IMR-90 (cell line): ENCODE measurements at regions of chr1 and their contacts with region 1.

Region 1: DNA sequence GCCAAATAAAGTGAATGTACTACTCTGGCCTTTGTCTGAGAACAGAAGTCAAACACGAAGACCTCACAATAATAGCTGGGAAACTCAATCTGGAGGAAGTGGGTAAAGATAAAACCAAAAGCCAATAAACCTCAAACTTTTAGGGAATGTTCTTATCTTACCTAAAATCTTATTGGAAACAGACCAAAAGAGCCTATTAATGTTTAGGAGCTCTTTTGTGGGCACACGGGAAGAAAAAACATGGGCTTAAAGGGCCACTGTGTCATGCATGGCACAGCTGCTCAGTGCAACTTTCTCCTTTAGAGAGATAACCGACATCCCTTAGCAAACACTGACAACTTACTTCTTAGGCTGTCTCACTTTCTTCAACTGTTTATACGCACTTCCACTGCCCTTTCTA is 16.1 kb downstream of the EIF2B3 start:
- DNase-seq: peak; percentile 30
- ATAC-seq: 0 out of 2 replicates have a peak, but pooled peaks have one; percentile 44
- H3K4me3 ChIP-seq: no peak overlapping the region
- H3K27ac ChIP-seq: no peak overlapping the region
- H3K4me1 ChIP-seq: peaks cover 2% of the 10 kb centered on the region; the same call in 1 of the 2 replicates
- H3K27me3 ChIP-seq: no peaks in the 10 kb centered on the region
- CTCF ChIP-seq: no peak
- POLR2A ChIP-seq: no peak
- RAD21 ChIP-seq: no peak

Region 2: DNA sequence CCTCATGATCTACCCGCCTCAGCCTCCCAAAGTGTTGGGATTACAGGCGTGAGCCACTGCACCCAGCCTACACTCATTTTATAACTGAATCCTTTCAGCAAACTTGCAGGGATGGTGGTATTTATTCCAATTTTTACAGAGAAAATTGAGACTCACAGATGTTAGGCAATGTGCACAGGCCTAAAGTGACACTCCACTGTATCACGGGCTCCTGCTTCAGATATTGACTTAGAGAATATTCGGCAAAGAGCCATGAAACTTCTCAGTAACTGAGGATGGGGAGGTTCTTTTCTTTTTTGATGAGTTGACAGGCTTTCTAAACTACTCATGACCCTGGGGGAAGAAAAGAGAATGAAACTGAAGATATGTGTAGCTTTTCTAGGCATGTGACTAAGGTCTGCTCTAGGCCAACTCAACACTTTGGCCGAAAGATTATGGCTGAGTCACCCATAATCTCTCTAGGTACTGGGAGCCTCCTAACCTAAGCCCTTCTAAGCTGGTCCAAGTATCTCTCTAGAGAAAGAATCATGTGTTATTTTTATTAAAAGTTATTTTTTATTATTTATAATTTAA is 107.4 kb before region 1 on chr1:
- CTCF ChIA-PET with region 1: no interaction called
- POLR2A ChIA-PET with region 1: interaction called, 11 read pairs
- dilution Hi-C with region 1: no loop called
- in situ Hi-C with region 1: loop called (anchors 25 kb)
- intact Hi-C with region 1: no loop called
- DNase-seq: peak; percentile 66
- ATAC-seq: peak; percentile 27; the same call in 1 of the 2 replicates
- H3K4me3 ChIP-seq: no peak overlapping the region
- H3K27ac ChIP-seq: no peak overlapping the region
- H3K4me1 ChIP-seq: no peaks in the 10 kb centered on the region
- H3K27me3 ChIP-seq: no peaks in the 10 kb centered on the region
- CTCF ChIP-seq: no peak
- POLR2A ChIP-seq: no peak
- RAD21 ChIP-seq: no peak

Region 3: DNA sequence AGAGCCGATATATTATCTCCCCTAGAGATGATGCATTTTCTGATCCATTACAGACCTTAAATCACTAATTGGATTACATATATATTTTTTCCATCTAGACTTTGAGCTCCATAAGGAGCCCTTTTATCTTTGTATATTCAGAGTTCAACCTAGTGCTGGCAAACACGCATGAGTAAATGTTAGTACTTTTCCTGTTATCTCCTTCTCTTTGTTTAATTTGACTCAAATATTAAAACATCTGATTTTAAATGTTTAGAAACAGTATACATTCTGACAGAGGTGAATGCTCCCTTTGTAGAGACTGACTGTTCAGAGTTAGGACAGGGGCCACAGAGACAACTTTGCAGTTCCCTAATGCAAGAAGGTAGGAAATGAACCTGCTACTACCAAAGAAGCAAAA is 21.0 kb before region 1 on chr1:
- CTCF ChIA-PET with region 1: no interaction called
- POLR2A ChIA-PET with region 1: no interaction called
- dilution Hi-C with region 1: no loop called
- in situ Hi-C with region 1: no loop called
- intact Hi-C with region 1: no loop called
- DNase-seq: no peak
- ATAC-seq: no peak; the same call in 1 of the 2 replicates
- H3K4me3 ChIP-seq: no peak overlapping the region
- H3K27ac ChIP-seq: no peak overlapping the region
- H3K4me1 ChIP-seq: peaks cover 14% of the 10 kb centered on the region
- H3K27me3 ChIP-seq: no peaks in the 10 kb centered on the region
- CTCF ChIP-seq: no peak
- POLR2A ChIP-seq: no peak
- RAD21 ChIP-seq: no peak